ENCODE measurements at regions of chr7 and their contacts with region 1.

Region 1: GRCh38 chr7:137898839-137899721 is 52.3 kb upstream of the DGKI start:
- DNase-seq: peak; percentile 90
- H3K4me3 ChIP-seq: peak overlapping the region; percentile 27
- H3K27ac ChIP-seq: peak overlapping the region; percentile 55
- H3K4me1 ChIP-seq: peaks cover 15% of the 10 kb centered on the region
- H3K27me3 ChIP-seq: no peaks in the 10 kb centered on the region
- CTCF ChIP-seq: peak; percentile 94

Region 2: GRCh38 chr7:137606061-137606674 is 292.9 kb before region 1 on chr7:
- CTCF ChIA-PET with region 1: no interaction called
- POLR2A ChIA-PET with region 1: no interaction called
- intact Hi-C with region 1: loop called (anchors 2 kb)
- DNase-seq: peak; percentile 67
- H3K4me3 ChIP-seq: no peak overlapping the region
- H3K27ac ChIP-seq: no peak overlapping the region
- H3K4me1 ChIP-seq: no peaks in the 10 kb centered on the region
- H3K27me3 ChIP-seq: peaks cover 15% of the 10 kb centered on the region
- CTCF ChIP-seq: peak; percentile 67

Region 3: DNA sequence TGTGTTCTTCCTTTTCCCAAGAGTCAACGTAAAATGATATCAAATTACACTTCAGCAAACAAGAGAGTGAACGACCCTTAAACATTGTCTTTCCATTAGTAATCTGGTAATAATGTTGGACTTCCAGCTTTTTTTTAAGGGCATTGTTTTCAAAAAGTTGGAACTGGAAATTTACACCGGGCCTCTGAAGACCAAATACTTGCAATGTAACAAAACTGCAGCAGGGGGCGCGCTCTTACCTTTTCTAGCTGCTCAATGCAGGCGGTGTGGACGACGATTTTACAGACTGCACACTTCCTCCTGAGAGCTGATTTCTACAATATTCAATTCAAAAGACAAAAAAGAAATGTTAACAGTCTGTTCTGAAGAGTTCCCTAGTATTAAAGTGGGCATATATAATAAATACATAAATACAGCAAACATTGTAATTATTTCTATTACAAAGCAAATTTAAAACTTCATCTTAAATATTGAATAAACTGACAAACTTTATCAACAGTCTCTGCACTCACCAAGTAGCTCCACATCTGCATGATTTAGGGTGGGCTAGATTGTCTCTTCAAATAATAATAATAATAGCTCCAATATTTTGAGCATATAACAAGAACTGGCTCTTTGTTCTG is 242.7 kb before region 1 on chr7:
- CTCF ChIA-PET with region 1: interaction called, 5 read pairs
- POLR2A ChIA-PET with region 1: no interaction called
- intact Hi-C with region 1: loop called (anchors 1 kb)
- DNase-seq: peak; percentile 78
- H3K4me3 ChIP-seq: no peak overlapping the region
- H3K27ac ChIP-seq: no peak overlapping the region
- H3K4me1 ChIP-seq: no peaks in the 10 kb centered on the region
- H3K27me3 ChIP-seq: no peaks in the 10 kb centered on the region
- CTCF ChIP-seq: peak; percentile 87

Region 4: GRCh38 chr7:138008547-138009349 is 109.7 kb after region 1 on chr7:
- CTCF ChIA-PET with region 1: interaction called, 5 read pairs
- POLR2A ChIA-PET with region 1: no interaction called
- intact Hi-C with region 1: loop called (anchors 1 kb)
- DNase-seq: peak; percentile 74
- H3K4me3 ChIP-seq: no peak overlapping the region
- H3K27ac ChIP-seq: no peak overlapping the region
- H3K4me1 ChIP-seq: no peaks in the 10 kb centered on the region
- H3K27me3 ChIP-seq: no peaks in the 10 kb centered on the region
- CTCF ChIP-seq: peak; percentile 84

Region 5: DNA sequence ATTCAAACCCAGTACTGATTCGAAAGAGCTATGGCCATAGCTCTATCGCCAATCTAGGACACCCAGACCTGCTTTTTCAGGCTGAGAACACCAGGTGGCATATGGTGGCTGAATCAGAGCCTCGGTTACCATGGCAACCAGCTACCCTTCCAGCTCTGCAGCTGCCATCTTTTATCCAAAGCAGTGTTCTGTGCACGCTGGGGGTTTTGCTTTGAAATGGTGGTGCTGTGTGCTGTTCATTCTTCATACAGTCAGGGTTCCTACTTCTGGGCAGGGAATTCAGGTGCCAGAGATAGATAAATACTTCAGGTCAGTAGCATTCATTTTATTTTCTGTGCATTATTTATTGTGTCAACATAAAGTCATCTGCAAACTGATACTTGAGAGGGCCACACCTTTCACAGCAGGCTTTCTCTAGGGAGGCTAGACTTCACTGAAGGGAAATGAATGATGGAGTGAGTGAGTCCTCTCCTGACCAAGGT is 262.6 kb after region 1 on chr7:
- CTCF ChIA-PET with region 1: no interaction called
- POLR2A ChIA-PET with region 1: no interaction called
- intact Hi-C with region 1: loop called (anchors 10 kb)
- DNase-seq: peak; percentile 91
- H3K4me3 ChIP-seq: no peak overlapping the region
- H3K27ac ChIP-seq: no peak overlapping the region
- H3K4me1 ChIP-seq: no peaks in the 10 kb centered on the region
- H3K27me3 ChIP-seq: no peaks in the 10 kb centered on the region
- CTCF ChIP-seq: peak; percentile 72

Region 6: GRCh38 chr7:138449580-138449979 is 550.5 kb after region 1 on chr7:
- CTCF ChIA-PET with region 1: no interaction called
- POLR2A ChIA-PET with region 1: no interaction called
- intact Hi-C with region 1: no loop called
- DNase-seq: peak; percentile 49
- H3K4me3 ChIP-seq: no peak overlapping the region
- H3K27ac ChIP-seq: no peak overlapping the region
- H3K4me1 ChIP-seq: no peaks in the 10 kb centered on the region
- H3K27me3 ChIP-seq: no peaks in the 10 kb centered on the region
- CTCF ChIP-seq: peak; percentile 47

Region 7: DNA sequence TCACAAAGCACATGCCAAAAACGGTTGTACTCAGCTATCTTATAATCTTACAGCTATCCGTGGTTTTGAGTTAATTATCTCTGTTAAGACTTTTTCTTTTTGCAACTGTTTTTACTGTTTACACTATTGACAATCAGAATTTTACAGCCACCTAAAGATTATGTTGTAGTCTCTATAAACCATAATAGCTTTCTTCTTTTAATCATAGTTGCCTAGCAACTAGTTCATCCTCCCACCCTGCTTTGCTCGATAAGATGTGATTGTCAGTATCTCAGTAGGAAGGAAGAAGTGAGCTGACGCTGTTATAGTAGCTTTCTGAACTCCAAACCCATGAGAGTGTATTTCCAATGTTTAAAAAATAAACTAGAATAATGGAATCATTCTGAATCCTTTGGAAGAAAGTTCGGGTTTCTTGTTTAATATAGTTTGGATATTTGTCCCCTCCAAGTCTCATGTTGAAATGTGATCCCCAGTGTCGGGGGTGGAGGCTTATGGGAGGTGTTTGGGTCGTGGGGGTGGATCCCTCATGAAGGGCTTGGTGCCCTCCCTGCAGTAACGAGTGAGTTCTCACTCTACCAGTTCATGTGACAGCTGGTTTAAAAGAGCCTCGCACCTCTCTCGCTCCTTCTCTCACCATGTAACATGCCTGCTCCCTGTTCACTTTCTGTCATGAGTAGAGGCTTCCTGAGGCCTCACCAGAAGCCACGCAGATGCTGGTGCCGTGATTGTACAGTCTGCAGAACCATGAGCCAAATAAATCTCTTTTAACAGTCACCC is 733.9 kb after region 1 on chr7:
- CTCF ChIA-PET with region 1: interaction called, 12 read pairs
- POLR2A ChIA-PET with region 1: no interaction called
- intact Hi-C with region 1: no loop called
- DNase-seq: no peak
- H3K4me3 ChIP-seq: no peak overlapping the region
- H3K27ac ChIP-seq: no peak overlapping the region
- H3K4me1 ChIP-seq: no peaks in the 10 kb centered on the region
- H3K27me3 ChIP-seq: peaks cover 5% of the 10 kb centered on the region
- CTCF ChIP-seq: no peak